ENCODE measurements at regions of chr5 and their contacts with region 1.

Region 1: DNA sequence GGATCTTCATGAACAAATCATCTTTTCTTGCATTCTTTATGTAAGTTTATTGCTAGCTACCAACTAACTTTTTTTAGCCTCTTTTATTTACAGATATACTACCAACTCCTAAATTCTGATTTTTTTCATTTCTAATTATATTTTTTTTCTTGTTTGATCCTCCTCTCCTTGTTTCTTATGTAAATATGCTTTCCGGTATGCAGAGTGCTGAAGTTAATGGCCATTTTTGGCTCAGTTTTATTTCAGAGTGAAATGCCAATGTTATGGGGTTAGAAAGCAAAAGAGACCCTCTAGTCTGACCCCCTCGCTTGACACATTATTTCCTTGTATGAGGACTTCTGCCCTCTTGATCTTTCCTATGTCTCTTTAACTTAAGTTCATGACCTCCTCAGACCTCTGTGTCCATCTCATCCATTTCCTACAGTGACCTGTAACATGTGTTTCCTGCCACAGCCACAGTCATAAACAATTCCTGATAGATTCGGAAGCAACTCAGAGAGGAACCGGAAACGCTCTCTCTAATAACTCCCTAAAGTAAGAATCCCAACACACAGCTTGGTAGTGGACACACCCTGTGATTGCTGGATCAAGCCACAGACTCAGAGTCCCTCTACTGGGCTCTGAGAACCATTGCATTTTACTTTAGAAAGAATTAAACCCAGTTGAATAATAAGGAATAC is 42.9 kb upstream of the AFAP1L1 start:
- DNase-seq: no peak
- H3K4me3 ChIP-seq: no peak overlapping the region
- H3K27ac ChIP-seq: no peak overlapping the region
- H3K4me1 ChIP-seq: peaks cover 0 to 3% (median 0%) of the 10 kb centered on the region in 4 experiments; a peak in 1 of 7 replicates
- H3K27me3 ChIP-seq: no peaks in the 10 kb centered on the region
- CTCF ChIP-seq: peak; percentile 15 to 67 (median 60)
- EP300 ChIP-seq: no peak
- POLR2A ChIP-seq: no peak
- RAD21 ChIP-seq: peak; percentile 77 to 82

Region 2: GRCh38 chr5:149114403-149115312 is 114.1 kb before region 1 on chr5:
- CTCF ChIA-PET with region 1: interaction called, 10 read pairs
- POLR2A ChIA-PET with region 1: no interaction called
- DNase-seq: peak in 1 of 2 experiments; percentile 60
- H3K4me3 ChIP-seq: no peak overlapping the region
- H3K27ac ChIP-seq: no peak overlapping the region
- H3K4me1 ChIP-seq: no peaks in the 10 kb centered on the region
- H3K27me3 ChIP-seq: no peaks in the 10 kb centered on the region
- CTCF ChIP-seq: peak; percentile 63 to 96 (median 84)
- EP300 ChIP-seq: no peak
- POLR2A ChIP-seq: no peak
- RAD21 ChIP-seq: peak; percentile 90 to 97

Region 3: DNA sequence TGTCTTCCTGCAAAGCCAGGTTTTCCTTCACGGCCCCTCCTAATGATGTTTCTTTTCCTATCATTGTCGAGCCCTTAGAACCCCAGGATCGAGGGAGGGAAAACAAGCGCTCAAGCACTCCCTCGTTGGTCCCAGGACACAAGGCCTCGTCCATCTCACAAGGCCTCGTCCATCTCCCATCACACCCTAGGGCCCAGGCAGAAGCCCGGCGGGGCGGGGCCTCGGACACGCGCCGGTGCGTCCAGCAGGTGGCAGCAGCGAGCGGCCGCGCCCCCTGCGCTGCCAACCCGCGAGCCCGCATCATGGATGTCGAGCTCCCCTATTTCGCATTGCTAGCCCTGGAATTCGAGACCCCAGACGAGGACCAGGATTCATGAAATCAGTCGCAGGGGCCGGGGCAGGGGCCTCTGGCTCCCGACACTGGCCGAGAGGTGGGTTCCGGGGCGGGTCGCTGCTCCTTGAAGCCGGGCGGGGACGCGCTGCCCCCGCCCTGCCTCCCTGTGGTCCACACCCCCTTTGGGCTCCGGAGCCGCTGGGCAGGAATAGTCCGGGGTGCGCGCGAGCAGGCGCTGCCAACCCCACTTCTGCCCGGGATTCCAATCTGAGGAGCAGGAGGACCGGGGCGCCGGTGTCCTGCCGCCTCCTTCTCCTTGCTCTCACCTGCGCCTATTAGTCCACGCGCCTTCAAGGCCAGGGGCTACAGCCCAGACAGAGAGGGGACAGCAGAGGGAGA is 87.4 kb before region 1 on chr5 and contains the start of gene ABLIM3:
- CTCF ChIA-PET with region 1: interaction called, 42 read pairs
- POLR2A ChIA-PET with region 1: no interaction called
- DNase-seq: peak; percentile 29 to 95
- H3K4me3 ChIP-seq: peak within 1 kb of the TSS; percentile 24 to 75 (median 51)
- H3K27ac ChIP-seq: no peak within 1 kb of the TSS
- H3K4me1 ChIP-seq: peaks cover 0 to 3% (median 0%) of the 10 kb centered on the region in 4 experiments; a peak in 1 of 7 replicates
- H3K27me3 ChIP-seq: peaks cover 0 to 21% (median 15%) of the 10 kb centered on the region in 4 experiments; a peak in 6 of 7 replicates
- CTCF ChIP-seq: peak; percentile 90 to 94 (median 93)
- EP300 ChIP-seq: no peak
- POLR2A ChIP-seq: no peak
- RAD21 ChIP-seq: peak; percentile 59 to 68
- total RNA-seq, gene ABLIM3: 0.56 and 0.69 TPM in 2 replicates

Region 4: GRCh38 chr5:149200355-149200754 is 28.4 kb before region 1 on chr5:
- CTCF ChIA-PET with region 1: interaction called, 14 read pairs
- POLR2A ChIA-PET with region 1: no interaction called
- DNase-seq: peak in 1 of 2 experiments; percentile 22
- H3K4me3 ChIP-seq: no peak overlapping the region
- H3K27ac ChIP-seq: no peak overlapping the region
- H3K4me1 ChIP-seq: no peaks in the 10 kb centered on the region
- H3K27me3 ChIP-seq: peaks cover 0 to 2% (median 0%) of the 10 kb centered on the region in 4 experiments; a peak in 2 of 7 replicates
- CTCF ChIP-seq: no peak
- EP300 ChIP-seq: no peak
- POLR2A ChIP-seq: no peak
- RAD21 ChIP-seq: no peak

Region 5: DNA sequence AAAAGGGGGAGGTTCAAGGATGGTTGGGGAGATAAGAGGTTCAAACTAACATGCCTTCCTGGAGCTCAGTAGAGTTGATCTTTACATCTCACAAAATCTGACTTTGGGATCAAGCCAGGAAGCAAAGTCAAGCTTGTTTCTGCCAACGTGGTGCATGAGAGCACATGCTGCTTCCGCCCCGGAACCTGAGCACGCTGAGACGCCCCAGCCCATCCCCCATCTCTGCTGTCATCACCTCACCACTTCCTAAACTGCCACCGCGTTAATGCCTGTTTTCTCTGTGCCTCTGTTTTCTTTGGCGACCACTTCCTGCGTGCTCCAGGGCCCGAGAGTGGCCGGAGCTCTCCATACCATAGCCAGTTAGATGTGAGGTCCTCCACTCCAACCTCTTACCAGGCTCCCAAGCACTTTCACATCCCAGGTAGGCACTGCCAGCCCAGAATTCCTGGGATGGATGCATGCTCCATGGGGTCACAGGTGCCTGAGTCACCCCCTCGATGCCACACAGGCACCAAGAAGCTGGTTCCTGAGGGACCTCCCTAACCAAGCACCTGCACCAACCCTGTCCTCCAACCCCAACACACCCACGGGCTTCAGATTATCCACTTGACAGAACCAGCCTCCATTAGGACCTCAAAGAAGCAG is 11.7 kb after region 1 on chr5:
- CTCF ChIA-PET with region 1: interaction called, 99 read pairs
- POLR2A ChIA-PET with region 1: no interaction called
- DNase-seq: no peak
- H3K4me3 ChIP-seq: no peak overlapping the region
- H3K27ac ChIP-seq: no peak overlapping the region
- H3K4me1 ChIP-seq: no peaks in the 10 kb centered on the region
- H3K27me3 ChIP-seq: no peaks in the 10 kb centered on the region; a peak in 1 of 7 replicates
- CTCF ChIP-seq: no peak
- EP300 ChIP-seq: no peak
- POLR2A ChIP-seq: no peak
- RAD21 ChIP-seq: no peak

Region 6: DNA sequence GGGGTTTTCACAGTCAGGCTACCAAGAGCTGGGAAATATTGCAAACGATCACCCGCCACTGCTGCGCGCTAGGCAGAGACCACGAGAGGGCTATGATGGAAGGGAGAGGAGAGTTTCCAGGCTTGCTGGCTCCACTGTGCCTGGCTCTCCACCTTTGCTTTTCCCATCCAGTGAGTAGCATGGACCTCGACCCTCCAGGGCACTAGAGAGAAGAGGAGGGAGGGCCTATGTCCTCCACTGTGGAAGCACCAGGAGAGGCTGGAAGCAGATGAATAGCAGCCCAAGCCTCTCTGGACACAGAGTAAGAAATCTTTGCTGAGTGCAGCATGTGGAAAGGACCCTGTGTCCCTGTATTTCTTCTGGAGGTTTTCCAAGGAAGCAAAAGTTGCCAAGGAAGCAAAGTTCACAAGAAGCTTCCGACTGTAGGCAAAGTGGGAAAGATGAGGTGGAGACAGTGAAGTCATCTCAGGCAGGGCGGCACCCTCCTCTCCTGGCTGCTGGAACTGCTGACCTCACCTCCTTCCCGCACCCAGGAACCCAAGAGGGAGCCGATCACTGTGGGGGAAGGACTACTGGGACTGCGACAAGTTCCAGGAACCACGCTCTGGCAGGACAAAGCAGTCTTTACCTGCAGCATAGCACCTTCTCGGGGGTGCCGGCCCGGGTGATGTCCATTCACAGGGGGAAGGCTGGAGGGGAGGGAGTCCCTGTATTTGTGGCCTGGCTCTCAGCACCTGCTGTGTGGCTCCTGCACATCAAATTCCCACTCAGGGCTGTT is 242.8 kb after region 1 on chr5:
- CTCF ChIA-PET with region 1: no interaction called
- POLR2A ChIA-PET with region 1: no interaction called
- DNase-seq: no peak
- H3K4me3 ChIP-seq: no peak overlapping the region
- H3K27ac ChIP-seq: no peak overlapping the region
- H3K4me1 ChIP-seq: 0 out of 7 replicates have a peak, but pooled peaks cover 0 to 2% (median 0%) of the 10 kb centered on the region in 4 experiments
- H3K27me3 ChIP-seq: no peaks in the 10 kb centered on the region
- CTCF ChIP-seq: no peak
- EP300 ChIP-seq: no peak
- POLR2A ChIP-seq: no peak
- RAD21 ChIP-seq: no peak